Left ventricle myocardium superior (tissue), 1 donor: ENCODE measurements at regions of chr1 and their contacts with region 1.

Region 1: DNA sequence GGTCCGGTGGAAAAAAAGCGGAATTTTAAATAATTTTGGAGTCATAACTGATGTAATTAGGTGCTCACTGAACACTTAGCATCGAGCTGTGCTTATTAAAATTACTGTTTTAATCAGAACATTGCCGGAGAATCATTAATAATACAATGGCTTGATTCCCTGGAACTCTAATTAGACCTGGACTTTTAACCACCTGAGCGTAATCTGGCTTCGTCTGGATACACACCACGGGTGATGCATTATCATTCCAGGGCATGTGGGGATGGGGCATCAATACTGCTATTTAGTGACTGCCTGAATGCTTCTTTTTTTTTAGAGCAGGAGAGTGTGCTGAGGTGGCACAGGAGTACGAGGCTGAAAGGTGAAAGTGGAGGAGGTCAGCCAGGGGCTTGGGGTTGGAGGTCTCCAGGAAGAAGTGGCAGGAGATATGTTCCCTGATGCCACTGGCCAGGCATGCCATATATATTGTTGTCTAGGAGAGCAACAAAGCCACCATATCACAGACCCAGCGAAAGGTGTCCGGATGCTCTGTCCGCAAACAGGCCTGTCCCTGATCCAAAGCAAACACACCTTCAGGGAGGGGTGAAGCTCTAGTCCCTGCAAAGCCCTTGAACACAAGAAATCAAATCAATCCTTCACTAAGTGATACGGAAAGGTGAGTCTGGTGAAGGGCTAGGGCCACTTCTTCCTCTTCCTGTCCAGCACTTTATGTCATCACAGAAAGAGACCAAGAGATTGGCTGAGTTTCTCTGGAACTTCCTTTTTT is 125.2 kb downstream of the PLXNA2 start:
- DNase-seq: no peak
- ATAC-seq: no peak

Region 2: GRCh38 chr1:208047975-208048374 is 71.0 kb before region 1 on chr1:
- intact Hi-C with region 1: loop called (anchors 2 kb)
- DNase-seq: peak; percentile 71
- ATAC-seq: peak; percentile 71